ENCODE measurements at regions of chr1 and their contacts with region 1.

Region 1: GRCh38 chr1:200372080-200372884 is 37.6 kb downstream of the ZNF281 start:
- DNase-seq: peak; percentile 96
- ATAC-seq: peak; percentile 93
- H3K4me3 ChIP-seq: peak overlapping the region in 2 of 3 experiments; percentile 11 to 39; a peak in 2 of 6 replicates
- H3K27ac ChIP-seq: peak overlapping the region; percentile 77
- H3K4me1 ChIP-seq: peaks cover 98% of the 10 kb centered on the region
- H3K27me3 ChIP-seq: no peaks in the 10 kb centered on the region
- CTCF ChIP-seq: no peak
- EP300 ChIP-seq: peak; percentile 93 to 99
- POLR2A ChIP-seq: no peak
- RAD21 ChIP-seq: no peak

Region 2: DNA sequence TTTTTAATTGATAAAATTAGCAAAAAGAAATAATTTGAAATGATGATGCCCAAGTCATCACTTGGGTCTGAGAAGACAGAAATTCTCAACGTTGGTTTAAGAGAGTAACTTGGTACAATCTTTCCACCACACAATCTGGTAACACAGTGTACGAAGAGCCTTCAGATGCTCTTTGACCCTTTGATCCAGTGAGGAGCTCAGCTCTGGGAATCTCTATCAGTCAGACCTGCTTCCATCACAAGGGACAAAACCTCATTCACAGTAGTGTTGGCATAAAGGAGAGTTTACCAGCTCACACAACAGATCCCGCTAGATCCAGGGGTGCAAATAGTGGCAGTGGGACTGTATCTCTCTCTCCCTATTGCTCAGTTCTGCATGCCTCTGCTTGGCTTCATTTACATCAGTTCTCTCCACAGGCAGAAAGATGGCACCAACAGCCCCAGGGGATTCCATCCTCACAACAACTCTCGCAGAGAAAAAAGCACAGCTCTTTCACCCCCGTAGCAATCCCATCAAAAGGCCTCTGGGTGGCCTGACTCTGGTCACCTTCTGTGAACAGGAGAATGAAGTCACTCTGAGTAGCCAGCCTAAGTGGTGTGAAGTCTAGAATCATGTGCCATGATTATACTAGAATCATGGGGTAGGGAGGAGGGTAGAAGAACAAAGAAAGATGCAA is 82.1 kb before region 1 on chr1:
- CTCF ChIA-PET with region 1: no interaction called
- POLR2A ChIA-PET with region 1: no interaction called
- in situ Hi-C with region 1: no loop called
- intact Hi-C with region 1: no loop called
- DNase-seq: peak; percentile 69
- ATAC-seq: peak; percentile 97
- H3K4me3 ChIP-seq: no peak overlapping the region; a peak in 1 of 6 replicates
- H3K27ac ChIP-seq: no peak overlapping the region
- H3K4me1 ChIP-seq: peaks cover 34% of the 10 kb centered on the region
- H3K27me3 ChIP-seq: no peaks in the 10 kb centered on the region; a peak in 1 of 5 replicates
- CTCF ChIP-seq: peak; percentile 24; the same call in 1 of the 2 replicates
- EP300 ChIP-seq: no peak
- POLR2A ChIP-seq: no peak
- RAD21 ChIP-seq: no peak; the same call in 1 of the 2 replicates

Region 3: GRCh38 chr1:200314085-200314750 is 58.1 kb before region 1 on chr1:
- CTCF ChIA-PET with region 1: no interaction called
- POLR2A ChIA-PET with region 1: interaction called, 6 read pairs
- in situ Hi-C with region 1: no loop called
- intact Hi-C with region 1: loop called (anchors 10 kb)
- DNase-seq: peak; percentile 91
- ATAC-seq: peak; percentile 98
- H3K4me3 ChIP-seq: peak overlapping the region in 2 of 3 experiments; percentile 52 to 63; a peak in 5 of 6 replicates
- H3K27ac ChIP-seq: peak overlapping the region; percentile 93
- H3K4me1 ChIP-seq: peaks cover 50% of the 10 kb centered on the region
- H3K27me3 ChIP-seq: no peaks in the 10 kb centered on the region
- CTCF ChIP-seq: no peak
- EP300 ChIP-seq: peak in 1 of 2 experiments; percentile 4; a peak in 1 of 4 replicates
- POLR2A ChIP-seq: peak in 1 of 2 experiments; percentile 39; a peak in 1 of 4 replicates
- RAD21 ChIP-seq: no peak

Region 4: GRCh38 chr1:200336111-200336845 is 36.0 kb before region 1 on chr1:
- CTCF ChIA-PET with region 1: no interaction called
- POLR2A ChIA-PET with region 1: interaction called, 10 read pairs
- in situ Hi-C with region 1: no loop called
- intact Hi-C with region 1: loop called (anchors 5 kb)
- DNase-seq: peak; percentile 53
- ATAC-seq: peak; percentile 23; the same call in 1 of the 3 replicates
- H3K4me3 ChIP-seq: no peak overlapping the region
- H3K27ac ChIP-seq: peak overlapping the region; percentile 34
- H3K4me1 ChIP-seq: peaks cover 69% of the 10 kb centered on the region
- H3K27me3 ChIP-seq: no peaks in the 10 kb centered on the region
- CTCF ChIP-seq: no peak
- EP300 ChIP-seq: peak in 1 of 2 experiments; percentile 72; a peak in 1 of 4 replicates
- POLR2A ChIP-seq: no peak
- RAD21 ChIP-seq: no peak

Region 5: DNA sequence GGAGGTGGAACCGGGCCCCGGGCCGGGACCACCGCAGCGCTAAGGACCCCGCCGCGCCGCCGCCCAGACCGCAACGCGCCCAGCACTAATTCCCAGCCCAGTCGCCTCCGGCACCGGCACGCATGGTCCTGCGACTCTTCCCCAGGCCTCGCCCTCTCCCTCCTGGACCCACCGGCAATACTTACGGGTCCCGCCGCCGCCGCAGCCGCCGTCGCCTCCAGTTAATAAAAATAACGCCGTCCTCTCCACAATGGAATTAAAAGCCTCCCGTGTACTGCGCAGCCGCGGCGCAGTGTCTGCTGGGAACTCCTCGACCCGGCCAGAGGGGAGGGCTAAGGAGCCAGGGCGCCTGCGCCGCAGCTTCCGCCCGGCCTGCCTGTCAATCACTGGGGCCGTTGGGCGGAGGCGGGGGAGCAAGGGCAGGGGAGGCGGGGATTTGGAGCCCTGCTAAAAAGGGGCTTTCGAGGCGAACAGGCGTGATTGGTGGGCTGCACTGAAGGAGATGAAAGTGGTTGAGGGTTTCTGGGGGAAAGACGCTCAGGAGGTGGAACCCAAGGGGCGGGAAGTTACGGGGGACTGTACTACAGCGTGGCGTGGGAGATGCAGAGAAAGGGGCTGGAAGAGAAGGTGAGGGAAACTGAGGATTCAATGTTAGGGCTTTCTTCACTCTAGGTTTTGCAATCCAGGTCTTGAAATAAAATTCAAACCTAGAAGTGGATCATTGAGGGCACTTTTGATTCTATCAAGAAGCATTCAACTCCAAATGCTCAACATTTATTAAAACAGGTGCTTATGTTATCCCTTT is 37.7 kb after region 1 on chr1 and contains the start of gene ZNF281:
- CTCF ChIA-PET with region 1: no interaction called
- POLR2A ChIA-PET with region 1: interaction called, 11 read pairs
- in situ Hi-C with region 1: no loop called
- intact Hi-C with region 1: loop called (anchors 2 kb)
- DNase-seq: peak; percentile 85
- ATAC-seq: peak; percentile 96
- H3K4me3 ChIP-seq: peak within 1 kb of the TSS; percentile 93 to 97 (median 93)
- H3K27ac ChIP-seq: peak within 1 kb of the TSS; percentile 77
- H3K4me1 ChIP-seq: peaks cover 81% of the 10 kb centered on the region
- H3K27me3 ChIP-seq: no peaks in the 10 kb centered on the region
- CTCF ChIP-seq: no peak
- EP300 ChIP-seq: no peak
- POLR2A ChIP-seq: peak; percentile 36 to 56
- RAD21 ChIP-seq: 0 out of 2 replicates have a peak, but pooled peaks have one; percentile 12
- total RNA-seq, gene ZNF281: 20.6 and 33.1 TPM in 2 replicates

Measured in HepG2 (cell line).